ENCODE measurements at regions of chr7 and their contacts with region 1.

Region 1: GRCh38 chr7:135519233-135519688 is 9.4 kb upstream of the CNOT4 start:
- DNase-seq: peak in 2 of 4 experiments; percentile 65 to 75
- ATAC-seq: peak; percentile 76
- H3K4me3 ChIP-seq: no peak overlapping the region
- H3K27ac ChIP-seq: peak overlapping the region; percentile 67; the same call in 2 of the 3 replicates
- H3K4me1 ChIP-seq: peaks cover 19 to 21% of the 10 kb centered on the region in 2 experiments
- H3K27me3 ChIP-seq: no peaks in the 10 kb centered on the region
- CTCF ChIP-seq: no peak
- EP300 ChIP-seq: peak; percentile 66
- POLR2A ChIP-seq: no peak
- RAD21 ChIP-seq: no peak

Region 2: DNA sequence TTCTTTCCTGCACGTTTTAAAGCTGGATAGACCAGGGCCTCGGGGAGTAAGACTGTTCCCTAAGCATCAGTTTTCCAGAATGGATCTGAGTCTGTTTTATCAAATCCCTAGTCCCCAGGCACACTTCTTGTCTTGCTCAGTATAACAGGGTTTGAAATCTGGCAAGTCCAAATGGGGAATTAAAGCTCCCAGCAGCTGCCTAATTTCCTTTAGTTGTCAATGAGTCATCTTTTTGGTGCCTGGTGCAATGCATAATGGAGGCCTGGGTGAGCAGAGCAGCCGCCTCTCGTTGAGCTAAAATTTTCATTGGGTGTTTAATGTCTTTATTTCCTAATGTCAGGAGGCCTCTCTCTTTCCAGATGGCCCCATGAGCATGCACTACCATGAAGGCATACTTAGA is 197.7 kb before region 1 on chr7:
- CTCF ChIA-PET with region 1: no interaction called
- POLR2A ChIA-PET with region 1: no interaction called
- in situ Hi-C with region 1: no loop called
- intact Hi-C with region 1: no loop called
- DNase-seq: no peak
- ATAC-seq: no peak
- H3K4me3 ChIP-seq: no peak overlapping the region
- H3K27ac ChIP-seq: no peak overlapping the region
- H3K4me1 ChIP-seq: peaks cover 0 to 3% of the 10 kb centered on the region in 2 experiments; a peak in 1 of 5 replicates
- H3K27me3 ChIP-seq: peaks cover 34 to 37% of the 10 kb centered on the region in 2 experiments
- CTCF ChIP-seq: no peak
- EP300 ChIP-seq: no peak
- POLR2A ChIP-seq: no peak
- RAD21 ChIP-seq: no peak

Region 3: DNA sequence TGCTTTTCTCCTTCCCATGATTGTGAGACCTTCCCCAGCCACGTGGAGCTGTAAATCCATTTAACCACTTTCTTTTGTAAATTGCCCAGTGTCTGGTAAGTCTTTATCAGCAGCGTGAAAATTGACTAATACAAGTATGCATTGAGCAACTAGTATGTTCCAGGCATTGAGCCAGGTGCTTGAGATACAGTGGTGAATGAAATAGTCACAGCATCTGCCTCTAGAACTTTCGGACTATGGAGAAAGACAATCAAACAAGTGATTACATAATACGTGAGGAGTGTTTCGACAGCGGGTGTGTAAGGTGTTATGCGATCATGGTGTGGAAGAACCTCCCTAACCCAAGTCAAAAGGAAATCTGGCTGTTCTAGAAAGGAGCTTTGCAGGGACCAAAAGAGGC is 16.9 kb after region 1 on chr7:
- CTCF ChIA-PET with region 1: no interaction called
- POLR2A ChIA-PET with region 1: interaction called, 15 read pairs
- in situ Hi-C with region 1: no loop called
- intact Hi-C with region 1: no loop called
- DNase-seq: no peak
- ATAC-seq: 0 out of 3 replicates have a peak, but pooled peaks have one; percentile 25
- H3K4me3 ChIP-seq: no peak overlapping the region
- H3K27ac ChIP-seq: no peak overlapping the region
- H3K4me1 ChIP-seq: no peaks in the 10 kb centered on the region; a peak in 3 of 5 replicates
- H3K27me3 ChIP-seq: peaks cover 3 to 8% of the 10 kb centered on the region in 2 experiments; a peak in 3 of 5 replicates
- CTCF ChIP-seq: no peak
- EP300 ChIP-seq: no peak
- POLR2A ChIP-seq: no peak
- RAD21 ChIP-seq: no peak

Region 4: DNA sequence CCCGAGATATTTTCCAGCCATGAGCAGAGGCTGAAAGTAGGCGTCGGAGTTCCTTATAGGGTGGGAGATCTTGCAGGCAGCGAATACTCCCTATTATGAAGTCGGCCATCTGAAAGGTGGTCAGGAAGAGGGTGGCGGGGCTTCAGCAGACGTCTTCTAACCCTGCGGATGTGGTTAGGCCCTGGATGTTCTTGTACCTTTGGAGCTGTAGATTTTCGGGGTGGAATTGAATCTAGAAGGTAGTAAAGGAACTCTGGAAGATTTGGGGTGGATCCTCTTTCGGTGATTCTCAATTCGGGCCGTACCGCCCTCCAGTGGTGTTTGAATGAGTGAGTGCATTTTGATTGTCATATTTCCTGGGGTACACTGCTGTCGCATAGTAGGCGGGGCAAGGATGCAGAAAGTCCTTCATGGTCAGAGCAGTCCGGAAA is 39.1 kb after region 1 on chr7:
- CTCF ChIA-PET with region 1: no interaction called
- POLR2A ChIA-PET with region 1: interaction called, 3 read pairs
- in situ Hi-C with region 1: loop called (anchors 5 kb)
- intact Hi-C with region 1: no loop called
- DNase-seq: peak; percentile 80 to 94 (median 86)
- ATAC-seq: peak; percentile 90
- H3K4me3 ChIP-seq: peak overlapping the region; percentile 63
- H3K27ac ChIP-seq: peak overlapping the region; percentile 94
- H3K4me1 ChIP-seq: peaks cover 4 to 8% of the 10 kb centered on the region in 2 experiments
- H3K27me3 ChIP-seq: no peaks in the 10 kb centered on the region; a peak in 1 of 5 replicates
- CTCF ChIP-seq: peak; percentile 87 to 94 (median 89)
- EP300 ChIP-seq: no peak; the same call in 1 of the 2 replicates
- POLR2A ChIP-seq: peak; percentile 56
- RAD21 ChIP-seq: peak; percentile 86 to 93

Region 5: DNA sequence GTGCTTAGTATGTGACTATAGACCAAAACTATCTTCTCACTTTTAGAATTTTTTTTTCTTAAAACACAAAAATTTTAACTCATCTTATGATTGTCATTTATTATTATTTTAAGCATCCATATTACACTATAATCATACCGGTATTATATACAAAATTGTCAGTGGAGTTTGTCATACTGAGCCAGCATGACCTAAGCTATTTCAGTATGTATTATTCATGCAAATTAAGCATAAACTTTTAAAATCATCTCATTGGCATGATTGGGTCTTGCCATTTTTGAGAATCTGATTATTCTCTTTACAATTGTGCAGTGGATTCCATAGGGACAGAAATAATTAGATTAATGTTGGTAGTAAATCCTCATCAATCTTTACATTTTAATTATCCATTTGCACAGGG is 96.9 kb after region 1 on chr7:
- CTCF ChIA-PET with region 1: no interaction called
- POLR2A ChIA-PET with region 1: no interaction called
- in situ Hi-C with region 1: no loop called
- intact Hi-C with region 1: no loop called
- DNase-seq: no peak
- ATAC-seq: no peak
- H3K4me3 ChIP-seq: no peak overlapping the region
- H3K27ac ChIP-seq: no peak overlapping the region
- H3K4me1 ChIP-seq: no peaks in the 10 kb centered on the region
- H3K27me3 ChIP-seq: no peaks in the 10 kb centered on the region
- CTCF ChIP-seq: no peak
- EP300 ChIP-seq: no peak
- POLR2A ChIP-seq: no peak
- RAD21 ChIP-seq: no peak

Measured in K562 (cell line).